Stomach (tissue), 19 donors: ENCODE measurements at regions of chr6 and their contacts with region 1.

Region 1: GRCh38 chr6:89934685-89935366 is 40.6 kb downstream of the GJA10 start:
- DNase-seq: no peak
- H3K4me3 ChIP-seq: no peak overlapping the region
- H3K27ac ChIP-seq: no peak overlapping the region
- H3K4me1 ChIP-seq: peaks cover 0 to 3% (median 0%) of the 10 kb centered on the region in 4 donors
- H3K27me3 ChIP-seq: no peaks in the 10 kb centered on the region
- CTCF ChIP-seq: no peak
- EP300 ChIP-seq: no peak
- POLR2A ChIP-seq: no peak

Region 2: GRCh38 chr6:89161326-89162046 is 773.3 kb before region 1 on chr6:
- intact Hi-C with region 1: no loop called
- DNase-seq: peak in 1 of 2 donors; percentile 19
- H3K4me3 ChIP-seq: no peak overlapping the region
- H3K27ac ChIP-seq: peak overlapping the region in 4 of 5 donors; percentile 56 to 89 (median 66)
- H3K4me1 ChIP-seq: peaks cover 0 to 6% (median 0%) of the 10 kb centered on the region in 4 donors
- H3K27me3 ChIP-seq: no peaks in the 10 kb centered on the region
- CTCF ChIP-seq: no peak
- EP300 ChIP-seq: no peak
- POLR2A ChIP-seq: no peak

Region 3: DNA sequence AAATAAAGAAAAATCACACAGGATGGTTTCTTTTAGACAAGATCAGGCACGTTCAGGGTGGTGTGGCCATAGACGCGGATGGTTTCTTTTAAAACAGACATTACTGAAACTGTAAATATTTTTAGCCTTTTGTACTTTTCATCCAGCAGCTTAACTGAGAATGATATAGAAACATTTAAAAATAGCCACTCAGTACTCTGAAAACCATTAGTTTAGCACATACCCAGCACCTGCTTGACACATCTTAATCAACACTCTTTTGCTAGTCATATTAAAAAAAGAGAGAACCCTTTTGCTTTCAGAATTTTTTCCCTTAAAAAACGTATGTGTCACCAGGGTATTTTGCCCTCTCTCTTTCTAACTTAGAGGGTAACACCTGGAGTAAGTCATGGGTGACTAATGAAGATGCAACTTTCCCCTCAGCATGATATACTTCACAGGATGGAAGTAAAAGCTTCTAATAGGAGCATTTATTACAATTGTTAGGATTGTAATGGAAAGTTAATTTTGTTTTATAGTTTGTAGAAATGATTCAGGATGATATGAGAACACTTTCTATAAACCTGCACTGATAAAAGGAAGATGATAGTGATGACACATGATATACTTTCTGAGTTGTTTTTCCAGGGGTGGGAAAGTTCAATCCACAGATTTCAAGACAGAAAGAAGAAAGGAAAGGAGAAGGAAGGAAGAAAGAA is 316.6 kb after region 1 on chr6:
- intact Hi-C with region 1: no loop called
- DNase-seq: no peak
- H3K4me3 ChIP-seq: no peak overlapping the region
- H3K27ac ChIP-seq: no peak overlapping the region
- H3K4me1 ChIP-seq: no peaks in the 10 kb centered on the region
- H3K27me3 ChIP-seq: no peaks in the 10 kb centered on the region
- CTCF ChIP-seq: no peak
- EP300 ChIP-seq: no peak
- POLR2A ChIP-seq: no peak

Region 4: DNA sequence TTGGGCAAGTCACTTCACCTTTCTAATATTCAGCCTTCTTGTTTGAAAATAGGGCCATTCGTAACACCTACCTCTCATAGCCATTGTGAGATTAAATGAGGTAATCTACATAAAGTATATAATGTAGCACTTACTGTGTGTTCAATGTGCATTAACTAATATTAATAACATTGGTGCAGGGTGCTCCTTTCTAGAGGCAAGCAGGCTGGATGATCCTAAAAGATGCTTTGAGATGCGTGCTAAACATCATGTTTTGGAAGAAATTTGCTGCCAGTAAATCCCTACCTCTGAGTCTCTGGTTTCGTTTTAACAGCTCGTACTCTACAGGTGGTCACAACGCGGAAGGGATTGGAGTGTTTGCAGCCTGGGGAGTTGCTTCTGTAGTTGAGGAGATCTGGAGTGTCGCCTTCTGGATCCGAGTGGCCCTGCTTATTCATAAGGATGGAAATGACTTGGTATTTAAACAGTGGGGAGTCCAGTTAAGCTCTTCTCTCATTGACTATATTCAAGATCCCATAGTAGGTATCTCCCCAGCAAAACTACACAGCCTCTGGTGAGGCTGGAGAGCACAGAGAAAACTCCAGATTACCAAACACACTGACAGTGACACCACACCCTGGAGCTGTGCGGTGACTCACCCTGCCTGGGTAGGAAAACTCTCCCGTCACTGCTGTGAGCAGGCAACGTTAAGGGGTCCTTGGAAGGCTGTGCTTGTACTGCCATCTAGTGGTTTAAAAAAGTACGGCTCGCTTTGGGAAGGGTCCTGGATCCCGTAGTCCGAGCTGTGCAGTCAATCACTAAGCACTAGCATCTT is 544.2 kb after region 1 on chr6:
- intact Hi-C with region 1: loop called (anchors 5 kb)
- DNase-seq: peak; percentile 84 to 96
- H3K4me3 ChIP-seq: no peak overlapping the region
- H3K27ac ChIP-seq: no peak overlapping the region
- H3K4me1 ChIP-seq: peaks cover 4 to 8% (median 6%) of the 10 kb centered on the region in 4 donors
- H3K27me3 ChIP-seq: no peaks in the 10 kb centered on the region
- CTCF ChIP-seq: peak in 6 of 7 experiments; percentile 71 to 91 (median 87)
- EP300 ChIP-seq: no peak
- POLR2A ChIP-seq: no peak